CD8-positive, alpha-beta T cell (primary cell): ENCODE measurements at regions of chr7 and their contacts with region 1.

Region 1: GRCh38 chr7:51090411-51090810 is 226.2 kb downstream of the COBL start:
- DNase-seq: no peak
- ATAC-seq: no peak
- H3K4me3 ChIP-seq: no peak overlapping the region
- H3K4me3 Mint-ChIP-seq: no peak overlapping the region
- H3K27ac ChIP-seq: no peak overlapping the region
- H3K27ac Mint-ChIP-seq: no peak overlapping the region
- H3K4me1 ChIP-seq: no peaks in the 10 kb centered on the region
- H3K4me1 Mint-ChIP-seq: no peaks in the 10 kb centered on the region
- H3K27me3 ChIP-seq: no peaks in the 10 kb centered on the region
- H3K27me3 Mint-ChIP-seq: peaks cover 2% of the 10 kb centered on the region
- CTCF ChIP-seq: no peak

Region 2: DNA sequence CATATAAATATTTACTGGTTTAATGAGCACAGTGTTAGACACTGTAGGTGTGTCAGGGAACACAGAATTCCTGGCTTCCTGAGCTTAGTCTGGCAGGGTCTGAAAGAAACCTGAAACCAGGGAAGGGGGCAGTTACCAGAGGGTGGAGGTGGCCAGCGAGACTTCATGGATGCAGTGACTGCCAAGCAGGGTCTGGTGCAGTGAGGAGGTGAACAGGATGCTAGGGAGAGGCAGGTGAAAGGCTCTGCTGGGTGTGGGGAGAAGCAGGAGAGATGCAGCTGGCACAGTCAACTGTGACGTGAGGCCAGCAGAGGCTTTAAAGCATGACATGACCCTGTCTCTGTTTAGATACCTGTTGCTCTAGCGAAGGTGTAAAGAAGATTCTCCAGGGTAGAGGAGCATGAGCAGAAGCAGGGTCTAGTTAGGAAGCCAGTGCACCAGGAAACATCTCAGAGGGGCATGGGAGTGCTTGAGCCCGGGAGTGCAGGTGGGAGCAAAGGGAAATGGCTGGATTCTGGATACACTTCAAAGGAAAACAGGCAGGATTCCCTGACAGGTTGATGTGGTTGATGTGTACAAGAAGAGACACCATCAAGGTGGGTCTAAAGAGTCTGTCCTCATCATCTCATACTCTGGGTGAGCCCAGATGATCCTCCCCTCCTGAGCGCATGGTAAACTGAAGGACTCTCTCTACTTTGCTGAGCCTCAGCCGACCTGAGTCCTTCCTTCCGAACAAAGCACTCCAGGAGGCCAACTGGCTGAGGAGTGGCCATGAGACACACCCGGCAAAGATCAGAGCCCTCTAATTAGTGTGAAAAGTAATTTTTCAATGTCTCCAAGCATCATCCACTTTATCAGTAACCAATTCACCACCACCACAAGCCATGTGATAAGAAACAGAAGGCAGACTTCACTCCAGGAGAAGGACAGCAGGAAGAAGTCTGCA is 39.4 kb after region 1 on chr7:
- CTCF ChIA-PET with region 1: no interaction called
- POLR2A ChIA-PET with region 1: no interaction called
- intact Hi-C with region 1: loop called in 1 of 2 experiments (anchors 2 kb)
- DNase-seq: no peak
- ATAC-seq: no peak
- H3K4me3 ChIP-seq: no peak overlapping the region
- H3K4me3 Mint-ChIP-seq: no peak overlapping the region
- H3K27ac ChIP-seq: no peak overlapping the region
- H3K27ac Mint-ChIP-seq: no peak overlapping the region
- H3K4me1 ChIP-seq: no peaks in the 10 kb centered on the region
- H3K4me1 Mint-ChIP-seq: no peaks in the 10 kb centered on the region
- H3K27me3 ChIP-seq: no peaks in the 10 kb centered on the region
- H3K27me3 Mint-ChIP-seq: no peaks in the 10 kb centered on the region
- CTCF ChIP-seq: no peak